ENCODE measurements at regions of chr16 and their contacts with region 1.

Region 1: GRCh38 chr16:3457434-3458252 is 14.2 kb downstream of the NAA60 start:
- DNase-seq: peak; percentile 62 to 93
- H3K4me3 ChIP-seq: peak overlapping the region; percentile 70 to 97 (median 86)
- H3K27ac ChIP-seq: peak overlapping the region; percentile 98
- H3K4me1 ChIP-seq: peaks cover 6 to 25% (median 17%) of the 10 kb centered on the region in 4 experiments; a peak in 6 of 7 replicates
- H3K27me3 ChIP-seq: no peaks in the 10 kb centered on the region
- CTCF ChIP-seq: peak; percentile 48 to 72 (median 53)
- EP300 ChIP-seq: peak in 1 of 2 experiments; percentile 77; a peak in 1 of 3 replicates
- POLR2A ChIP-seq: peak; percentile 88 to 91
- RAD21 ChIP-seq: peak; percentile 28 to 51; a peak in 3 of 4 replicates

Region 2: DNA sequence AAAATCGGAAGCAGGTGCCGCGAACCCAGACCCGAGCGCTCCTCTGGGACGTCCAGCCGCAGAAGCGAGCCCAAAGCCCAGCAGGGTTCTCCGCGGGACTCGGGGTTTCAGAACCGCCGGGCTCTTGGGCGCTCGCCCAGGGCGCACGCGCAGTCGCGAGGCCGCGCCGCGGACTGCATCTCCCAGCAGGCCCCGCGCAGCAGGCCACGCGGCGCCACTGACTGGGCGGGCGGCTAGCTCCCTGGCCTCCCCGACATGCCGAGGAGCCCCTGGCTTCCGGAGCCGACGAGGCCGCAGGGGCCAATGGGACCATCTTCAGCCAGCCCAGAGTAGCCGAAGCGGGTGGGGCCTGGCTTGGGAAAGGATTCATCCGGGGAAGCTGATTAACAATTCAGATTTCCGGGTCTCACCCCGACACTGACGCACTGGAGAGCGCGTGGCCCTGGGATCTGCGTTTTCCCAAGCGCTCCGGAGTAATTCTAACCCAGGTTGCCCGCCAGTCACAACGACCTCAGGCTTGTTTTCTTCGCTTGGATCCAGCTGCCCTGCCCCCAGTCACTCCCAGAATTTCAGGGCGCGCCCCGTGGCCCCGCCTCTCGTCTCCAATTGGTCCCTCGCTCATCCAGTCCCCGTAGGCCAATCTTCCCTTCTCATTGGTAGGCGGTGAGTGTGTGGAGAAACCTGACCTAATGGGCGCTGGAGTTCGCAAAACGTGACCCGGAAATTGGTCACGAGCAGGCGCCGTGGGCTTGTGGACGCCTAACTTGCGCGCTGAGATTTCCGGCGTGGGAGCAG is 174.7 kb before region 1 on chr16 and contains the start of gene ZNF263:
- CTCF ChIA-PET with region 1: no interaction called
- POLR2A ChIA-PET with region 1: interaction called, 10 read pairs
- DNase-seq: peak; percentile 80 to 90
- H3K4me3 ChIP-seq: peak within 1 kb of the TSS; percentile 81 to 99 (median 97)
- H3K27ac ChIP-seq: peak within 1 kb of the TSS; percentile 97
- H3K4me1 ChIP-seq: peaks cover 0 to 8% (median 1%) of the 10 kb centered on the region in 4 experiments; a peak in 4 of 7 replicates
- H3K27me3 ChIP-seq: no peaks in the 10 kb centered on the region
- CTCF ChIP-seq: no peak
- EP300 ChIP-seq: no peak
- POLR2A ChIP-seq: peak; percentile 26 to 97
- RAD21 ChIP-seq: no peak
- total RNA-seq, gene ZNF263: 26.7 and 27.8 TPM in 2 replicates

Region 3: DNA sequence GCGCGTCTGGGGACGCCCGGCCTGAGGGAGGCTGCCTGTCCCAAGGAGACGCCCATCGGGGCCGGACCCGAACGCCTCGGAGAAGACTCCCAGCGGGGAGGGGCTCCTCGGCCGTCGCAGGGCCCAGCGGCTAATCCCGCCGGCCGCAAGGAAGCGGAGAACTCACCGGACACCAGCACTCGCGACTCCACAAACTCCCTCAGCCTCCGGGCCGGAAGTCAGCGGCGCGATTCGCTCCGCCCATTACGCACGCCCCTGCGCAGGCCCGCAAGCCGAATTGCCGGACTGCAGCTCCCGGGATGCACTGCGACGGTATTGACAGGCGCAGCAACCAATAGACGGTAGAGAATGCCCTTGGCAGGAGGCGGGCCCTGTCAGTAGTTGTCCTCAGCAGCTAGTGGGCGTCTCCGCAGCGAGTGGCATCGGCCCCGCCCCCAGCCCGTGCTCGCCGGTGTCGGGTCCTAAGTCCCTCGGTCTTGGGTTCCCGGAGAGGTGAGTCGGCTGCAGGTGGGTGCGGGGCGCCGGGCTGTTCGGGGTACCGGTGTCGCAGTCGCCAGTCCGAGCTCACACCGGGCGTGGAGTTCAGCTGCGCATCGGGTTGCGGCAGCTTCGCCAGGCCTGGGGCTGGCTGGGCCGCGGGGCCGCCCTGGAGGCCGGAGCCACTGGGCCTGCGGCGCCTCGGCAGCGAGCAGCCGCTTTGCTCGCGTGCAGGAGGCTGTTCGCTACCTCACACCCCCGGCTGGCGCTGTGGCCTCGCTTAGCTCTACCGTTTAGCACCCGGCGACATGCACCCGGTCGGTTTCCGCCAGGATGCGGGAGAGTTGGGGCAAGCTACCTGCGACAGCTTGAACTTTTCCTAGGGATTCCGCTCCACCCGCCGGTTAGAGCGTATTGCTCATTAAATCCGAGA is 56.6 kb before region 1 on chr16 and contains the starts of genes ZNF174 and ZSCAN32:
- CTCF ChIA-PET with region 1: interaction called, 3 read pairs
- POLR2A ChIA-PET with region 1: interaction called, 10 read pairs
- DNase-seq: peak; percentile 99
- H3K4me3 ChIP-seq: peak within 1 kb of the TSS; percentile 86 to 89 (median 87)
- H3K27ac ChIP-seq: no peak within 1 kb of the TSS
- H3K4me1 ChIP-seq: peaks cover 0 to 2% (median 0%) of the 10 kb centered on the region in 4 experiments; a peak in 2 of 7 replicates
- H3K27me3 ChIP-seq: no peaks in the 10 kb centered on the region
- CTCF ChIP-seq: no peak
- EP300 ChIP-seq: no peak
- POLR2A ChIP-seq: peak in 1 of 2 experiments; percentile 73; a peak in 2 of 3 replicates
- RAD21 ChIP-seq: no peak; a peak in 1 of 4 replicates
- total RNA-seq, gene ZNF174: 12.2 and 12.7 TPM in 2 replicates
- total RNA-seq, gene ZSCAN32: 22.0 and 22.6 TPM in 2 replicates

Region 4: GRCh38 chr16:3413730-3414379 is 43.8 kb before region 1 on chr16:
- CTCF ChIA-PET with region 1: no interaction called
- POLR2A ChIA-PET with region 1: no interaction called
- DNase-seq: no peak
- H3K4me3 ChIP-seq: no peak overlapping the region
- H3K27ac ChIP-seq: no peak overlapping the region
- H3K4me1 ChIP-seq: no peaks in the 10 kb centered on the region
- H3K27me3 ChIP-seq: no peaks in the 10 kb centered on the region
- CTCF ChIP-seq: no peak
- EP300 ChIP-seq: no peak
- POLR2A ChIP-seq: no peak
- RAD21 ChIP-seq: no peak

Region 5: GRCh38 chr16:3443108-3444031 is 14.3 kb before region 1 on chr16 and contains the starts of genes NAA60 and ZNF597:
- CTCF ChIA-PET with region 1: interaction called, 5 read pairs
- POLR2A ChIA-PET with region 1: interaction called, 16 read pairs
- DNase-seq: peak; percentile 50 to 64
- H3K4me3 ChIP-seq: peak within 1 kb of the TSS; percentile 67 to 85 (median 78)
- H3K27ac ChIP-seq: peak within 1 kb of the TSS; percentile 37; the same call in 1 of the 2 replicates
- H3K4me1 ChIP-seq: no peaks in the 10 kb centered on the region; a peak in 1 of 7 replicates
- H3K27me3 ChIP-seq: no peaks in the 10 kb centered on the region
- CTCF ChIP-seq: no peak
- EP300 ChIP-seq: no peak
- POLR2A ChIP-seq: no peak
- RAD21 ChIP-seq: 0 out of 4 replicates have a peak, but pooled peaks of 1 of the 2 experiments have one; percentile 2
- total RNA-seq, gene NAA60: 47.6 and 48.3 TPM in 2 replicates
- total RNA-seq, gene ZNF597: 2.3 and 2.6 TPM in 2 replicates

Measured in H1 (cell line).